ENCODE measurements at regions of chr7 and their contacts with region 1.

Region 1: DNA sequence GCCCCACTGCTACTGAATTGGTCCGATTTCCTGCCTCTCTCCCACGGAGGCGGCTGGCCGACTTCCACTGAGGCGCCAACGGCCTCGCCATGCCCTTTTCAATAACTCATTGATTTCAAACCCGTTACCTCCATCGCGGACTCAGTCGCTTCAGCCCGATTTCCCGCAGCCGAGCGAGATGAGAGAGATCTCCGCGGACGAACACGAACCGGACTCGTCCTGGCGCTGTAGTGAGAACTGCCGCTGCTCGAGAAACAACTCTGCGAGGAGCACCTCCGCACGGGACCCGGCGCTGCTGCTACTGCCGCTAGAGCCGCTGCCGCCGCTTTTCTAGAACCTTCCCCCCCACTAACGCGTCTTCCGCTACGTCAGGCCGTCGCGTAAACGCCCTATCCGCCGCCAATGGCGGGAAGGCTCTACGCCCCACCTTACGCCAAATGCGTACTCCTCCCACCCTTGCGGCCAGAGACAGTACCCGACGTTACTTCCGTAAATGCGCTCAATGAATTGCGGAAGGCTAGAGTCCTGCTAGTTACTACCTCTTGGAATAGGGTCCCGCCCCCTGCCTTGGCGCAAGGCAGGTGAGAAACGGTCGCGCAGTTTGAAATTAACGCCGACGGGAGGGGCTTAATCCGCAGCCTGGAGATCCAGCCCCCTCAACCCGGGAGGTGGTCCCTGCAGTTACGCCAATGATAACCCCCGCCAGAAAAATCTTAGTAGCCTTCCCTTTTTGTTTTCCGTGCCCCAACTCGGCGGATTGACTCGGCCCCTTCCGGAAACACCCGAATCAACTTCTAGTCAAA is at the start of gene HNRNPA2B1:
- DNase-seq: peak; percentile 97
- H3K4me3 ChIP-seq: peak within 1 kb of the TSS; percentile 78 to 98 (median 86)
- H3K27ac ChIP-seq: peak within 1 kb of the TSS; percentile 97 to 100 (median 99)
- H3K4me1 ChIP-seq: peaks cover 34 to 56% (median 41%) of the 10 kb centered on the region in 4 donors
- H3K27me3 ChIP-seq: no peaks in the 10 kb centered on the region
- CTCF ChIP-seq: peak in 4 of 5 experiments; percentile 7 to 55 (median 30)
- EP300 ChIP-seq: peak; percentile 57
- POLR2A ChIP-seq: peak; percentile 100
- total RNA-seq, gene HNRNPA2B1: 123 to 362 (median 208) TPM

Region 2: DNA sequence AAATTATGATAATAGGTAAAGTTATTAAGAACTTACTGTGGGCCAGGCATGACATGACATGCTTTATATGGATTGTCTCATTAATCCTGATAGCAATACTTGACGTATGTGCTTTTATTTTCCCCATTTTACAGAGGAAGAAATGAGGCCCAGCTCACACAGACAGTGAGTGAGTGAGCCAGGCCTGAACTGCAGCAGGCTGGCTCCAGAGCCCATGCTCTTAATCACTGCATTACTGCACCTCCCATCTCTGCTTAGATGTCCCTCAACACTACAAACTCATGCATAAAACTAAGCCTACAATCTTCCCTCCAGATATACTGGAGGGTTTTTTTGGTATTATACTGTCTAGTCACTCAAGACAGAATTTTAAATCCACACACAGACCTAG is 1152.2 kb before region 1 on chr7:
- in situ Hi-C with region 1: no loop called
- intact Hi-C with region 1: no loop called
- DNase-seq: no peak
- H3K4me3 ChIP-seq: no peak overlapping the region
- H3K27ac ChIP-seq: no peak overlapping the region
- H3K4me1 ChIP-seq: no peaks in the 10 kb centered on the region
- H3K27me3 ChIP-seq: no peaks in the 10 kb centered on the region
- CTCF ChIP-seq: no peak
- EP300 ChIP-seq: no peak
- POLR2A ChIP-seq: no peak

Region 3: GRCh38 chr7:25857376-25857921 is 343.2 kb before region 1 on chr7:
- in situ Hi-C with region 1: no loop called
- intact Hi-C with region 1: loop called (anchors 2 kb)
- DNase-seq: peak; percentile 82
- H3K4me3 ChIP-seq: peak overlapping the region in 3 of 4 donors; percentile 28 to 53 (median 40)
- H3K27ac ChIP-seq: peak overlapping the region; percentile 87 to 94 (median 88)
- H3K4me1 ChIP-seq: peaks cover 9 to 56% (median 34%) of the 10 kb centered on the region in 4 donors
- H3K27me3 ChIP-seq: peaks cover 96% of the 10 kb centered on the region
- CTCF ChIP-seq: no peak
- EP300 ChIP-seq: no peak
- POLR2A ChIP-seq: no peak

Region 4: DNA sequence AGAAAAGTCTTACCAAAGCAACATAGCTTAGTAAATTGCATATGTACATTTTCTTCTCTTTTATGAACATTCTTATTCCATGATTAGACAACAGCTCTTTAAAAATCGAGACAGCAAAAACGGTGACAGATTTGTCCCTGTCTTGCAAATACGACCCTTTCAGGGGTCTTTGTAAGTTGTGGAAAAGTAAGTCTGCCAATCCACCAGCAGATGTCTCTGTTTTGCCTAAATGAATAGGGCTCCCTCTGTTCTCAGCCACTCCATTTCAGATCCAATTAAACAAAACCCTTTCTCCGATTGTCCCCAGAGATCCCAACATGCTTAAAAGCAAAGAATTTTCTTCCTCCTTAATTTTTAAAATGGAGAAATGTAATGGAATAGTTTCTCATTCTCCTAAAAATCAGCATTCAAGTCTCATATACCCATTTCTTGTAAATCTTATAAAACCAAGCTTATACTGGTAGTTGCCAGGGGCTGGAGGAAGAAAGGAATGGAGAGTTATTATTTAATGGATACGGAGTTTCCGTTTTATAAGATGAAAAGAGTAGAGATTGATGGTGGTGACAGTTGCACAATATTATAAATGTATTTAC is 109.6 kb before region 1 on chr7:
- in situ Hi-C with region 1: loop called in 2 of 4 experiments (anchors 10 kb)
- intact Hi-C with region 1: no loop called
- DNase-seq: no peak
- H3K4me3 ChIP-seq: no peak overlapping the region
- H3K27ac ChIP-seq: no peak overlapping the region
- H3K4me1 ChIP-seq: peaks cover 0 to 7% (median 2%) of the 10 kb centered on the region in 4 donors
- H3K27me3 ChIP-seq: no peaks in the 10 kb centered on the region
- CTCF ChIP-seq: peak; percentile 57 to 78 (median 61)
- EP300 ChIP-seq: no peak
- POLR2A ChIP-seq: no peak

Region 5: DNA sequence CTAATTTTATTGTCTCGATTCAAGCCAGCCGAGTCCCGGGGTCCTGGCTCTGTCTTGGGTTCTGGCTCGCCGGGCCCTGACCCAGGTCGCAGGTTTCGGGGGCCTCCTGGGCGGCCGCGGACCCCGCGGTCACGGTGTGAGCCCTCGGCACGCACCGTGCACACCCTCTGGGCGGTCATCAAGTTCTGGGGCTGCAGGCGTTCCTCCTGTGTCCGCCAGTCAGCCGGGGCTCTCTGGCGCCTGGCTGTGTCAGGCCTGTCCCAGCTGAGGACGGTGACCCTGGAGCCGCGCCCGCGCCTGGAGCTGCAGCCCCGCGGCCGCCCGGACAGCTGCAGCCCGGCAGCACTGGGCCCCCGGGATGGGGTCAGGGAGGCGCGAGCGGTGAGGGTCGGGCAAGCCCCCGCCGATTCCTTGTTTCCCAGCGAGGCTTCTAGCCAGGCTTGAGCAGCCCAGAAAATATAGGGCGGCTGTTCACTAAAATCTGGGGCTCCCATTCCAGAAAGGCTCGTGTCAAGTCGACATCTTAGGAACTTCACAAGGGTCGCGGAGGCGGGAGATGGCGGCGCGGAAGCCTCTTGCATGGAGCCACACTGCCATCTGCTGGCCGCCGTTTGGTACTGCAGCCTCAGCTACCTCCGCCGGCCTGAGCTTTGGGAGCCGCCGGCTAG is 960.0 kb after region 1 on chr7:
- in situ Hi-C with region 1: loop called in 2 of 4 experiments (anchors 25 kb)
- intact Hi-C with region 1: no loop called
- DNase-seq: peak; percentile 94
- H3K4me3 ChIP-seq: peak overlapping the region; percentile 30 to 62 (median 48)
- H3K27ac ChIP-seq: peak overlapping the region; percentile 95 to 99 (median 98)
- H3K4me1 ChIP-seq: peaks cover 4 to 41% (median 19%) of the 10 kb centered on the region in 4 donors
- H3K27me3 ChIP-seq: peaks cover 18% of the 10 kb centered on the region
- CTCF ChIP-seq: peak; percentile 100
- EP300 ChIP-seq: no peak
- POLR2A ChIP-seq: peak; percentile 27

Measured in transverse colon (tissue), 4 donors.